Activated naive CD4-positive, alpha-beta T cell treated with anti-CD3 and anti-CD28 coated beads for 36 hours (primary cell): ENCODE measurements at regions of chr3 and their contacts with region 1.

Region 1: GRCh38 chr3:45499529-45499928 is 95.0 kb upstream of the LIMD1 start:
- DNase-seq: no peak
- H3K4me3 Mint-ChIP-seq: no peak overlapping the region
- H3K27ac Mint-ChIP-seq: no peak overlapping the region
- H3K4me1 Mint-ChIP-seq: peaks cover 25% of the 10 kb centered on the region
- H3K27me3 Mint-ChIP-seq: no peaks in the 10 kb centered on the region

Region 2: DNA sequence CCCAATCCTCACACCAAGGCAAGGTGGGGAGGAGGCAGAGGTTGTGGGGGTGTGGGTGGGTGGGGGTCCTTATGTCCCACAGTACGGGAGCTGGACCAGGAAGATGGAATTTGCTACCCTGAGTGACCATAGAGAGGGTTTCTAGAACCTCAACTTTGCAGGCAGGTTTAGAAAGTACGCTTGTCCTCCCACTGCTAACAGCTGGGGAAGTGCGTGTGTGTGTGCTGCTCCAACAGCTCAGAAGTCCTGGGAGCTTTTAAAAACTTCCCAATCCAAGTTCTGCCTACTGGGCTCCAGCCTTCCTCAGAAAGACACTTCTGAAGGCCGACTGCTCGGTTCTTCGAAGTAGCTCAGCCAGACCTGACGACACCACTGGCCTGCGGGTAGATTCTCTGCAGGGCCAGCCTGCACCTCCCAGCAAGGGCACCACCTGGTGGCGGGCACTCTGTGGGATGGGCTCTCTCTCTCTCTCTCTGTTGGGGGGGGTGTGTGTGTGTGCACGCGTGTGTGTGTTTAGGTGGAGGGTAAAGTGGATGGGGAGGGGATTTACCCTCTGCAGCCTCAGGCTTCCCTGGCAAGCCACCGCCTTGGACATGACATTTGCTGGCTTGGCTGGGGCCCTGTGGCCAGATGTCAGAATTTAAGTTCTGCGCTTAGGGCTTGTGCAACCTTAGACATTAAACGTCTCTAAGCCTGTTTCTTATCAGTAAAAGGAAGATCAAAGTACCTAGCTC is 289.1 kb before region 1 on chr3:
- CTCF ChIA-PET with region 1: interaction called, 3 read pairs
- intact Hi-C with region 1: loop called (anchors 5 kb)
- DNase-seq: peak; percentile 86
- H3K4me3 Mint-ChIP-seq: no peak overlapping the region
- H3K27ac Mint-ChIP-seq: no peak overlapping the region
- H3K4me1 Mint-ChIP-seq: peaks cover 11% of the 10 kb centered on the region
- H3K27me3 Mint-ChIP-seq: peaks cover 3% of the 10 kb centered on the region

Region 3: GRCh38 chr3:45224824-45225464 is 274.6 kb before region 1 on chr3:
- CTCF ChIA-PET with region 1: no interaction called
- intact Hi-C with region 1: loop called (anchors 2 kb)
- DNase-seq: peak; percentile 57
- H3K4me3 Mint-ChIP-seq: peak overlapping the region; percentile 71
- H3K27ac Mint-ChIP-seq: no peak overlapping the region
- H3K4me1 Mint-ChIP-seq: peaks cover 10% of the 10 kb centered on the region
- H3K27me3 Mint-ChIP-seq: peaks cover 64% of the 10 kb centered on the region

Region 4: GRCh38 chr3:45701172-45701867 is 201.8 kb after region 1 on chr3:
- CTCF ChIA-PET with region 1: no interaction called
- intact Hi-C with region 1: no loop called
- DNase-seq: no peak
- H3K4me3 Mint-ChIP-seq: no peak overlapping the region
- H3K27ac Mint-ChIP-seq: no peak overlapping the region
- H3K4me1 Mint-ChIP-seq: peaks cover 55% of the 10 kb centered on the region
- H3K27me3 Mint-ChIP-seq: no peaks in the 10 kb centered on the region